Left ventricle myocardium inferior (tissue), 1 donor: ENCODE measurements at regions of chr12 and their contacts with region 1.

Region 1: DNA sequence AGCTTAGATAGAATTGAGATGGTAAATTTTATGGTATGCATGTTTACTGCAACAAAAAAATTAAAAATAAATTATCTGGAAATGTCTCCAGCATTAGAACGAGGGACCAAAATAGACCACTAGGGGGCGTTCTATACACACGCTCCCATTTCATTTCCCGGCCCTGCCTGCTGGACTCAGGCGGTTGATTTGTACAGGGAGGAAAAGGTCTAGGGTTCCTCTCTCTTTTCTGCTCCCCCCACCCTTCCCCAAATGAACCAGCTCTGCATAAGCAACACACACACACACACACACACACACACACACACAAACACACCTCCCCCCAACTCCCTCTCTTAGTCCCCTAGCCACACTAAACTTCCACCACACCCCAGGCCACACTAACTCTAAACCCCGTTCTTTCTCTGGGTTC is 7.8 kb upstream of the DTX1 start:
- DNase-seq: no peak
- H3K4me3 ChIP-seq: no peak overlapping the region
- H3K27ac ChIP-seq: no peak overlapping the region
- H3K4me1 ChIP-seq: no peaks in the 10 kb centered on the region
- H3K27me3 ChIP-seq: peaks cover 74% of the 10 kb centered on the region
- CTCF ChIP-seq: peak; percentile 84

Region 2: GRCh38 chr12:112239881-112240280 is 808.8 kb before region 1 on chr12:
- intact Hi-C with region 1: no loop called
- DNase-seq: no peak
- H3K4me3 ChIP-seq: no peak overlapping the region
- H3K27ac ChIP-seq: no peak overlapping the region
- H3K4me1 ChIP-seq: no peaks in the 10 kb centered on the region
- H3K27me3 ChIP-seq: no peaks in the 10 kb centered on the region
- CTCF ChIP-seq: no peak

Region 3: DNA sequence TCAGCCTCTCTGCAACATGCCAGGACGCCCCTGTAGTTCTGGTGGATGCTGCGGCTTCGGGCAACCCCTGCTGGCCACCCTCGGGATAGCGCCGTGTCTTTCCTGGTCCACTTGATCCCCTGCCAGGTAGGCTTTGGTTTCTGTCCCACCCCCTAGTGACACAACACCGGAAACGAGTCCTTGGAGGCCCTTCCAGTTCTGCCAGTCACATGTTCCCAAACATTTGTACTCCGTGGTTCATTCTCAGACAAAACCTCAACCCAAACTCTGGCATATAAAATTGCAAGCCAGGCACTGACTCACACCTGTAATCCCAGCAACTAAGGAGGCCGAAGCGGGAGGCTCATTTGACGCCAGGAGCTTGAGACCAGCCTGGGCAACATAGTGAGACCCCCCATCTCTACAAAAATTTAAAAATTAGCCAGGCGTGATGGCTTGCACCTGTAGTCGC is 49.7 kb after region 1 on chr12:
- intact Hi-C with region 1: loop called (anchors 2 kb)
- DNase-seq: peak; percentile 74
- H3K4me3 ChIP-seq: no peak overlapping the region
- H3K27ac ChIP-seq: no peak overlapping the region
- H3K4me1 ChIP-seq: peaks cover 5% of the 10 kb centered on the region
- H3K27me3 ChIP-seq: peaks cover 71% of the 10 kb centered on the region
- CTCF ChIP-seq: peak; percentile 78

Region 4: GRCh38 chr12:113174461-113175384 is 126.0 kb after region 1 on chr12:
- intact Hi-C with region 1: loop called (anchors 10 kb)
- DNase-seq: peak; percentile 73
- H3K4me3 ChIP-seq: no peak overlapping the region
- H3K27ac ChIP-seq: no peak overlapping the region
- H3K4me1 ChIP-seq: no peaks in the 10 kb centered on the region
- H3K27me3 ChIP-seq: no peaks in the 10 kb centered on the region
- CTCF ChIP-seq: peak; percentile 100